Activated CD4-positive, alpha-beta memory T cell treated with anti-CD3 and anti-CD28 coated beads for 36 hours (primary cell): ENCODE measurements at regions of chr5 and their contacts with region 1.

Region 1: DNA sequence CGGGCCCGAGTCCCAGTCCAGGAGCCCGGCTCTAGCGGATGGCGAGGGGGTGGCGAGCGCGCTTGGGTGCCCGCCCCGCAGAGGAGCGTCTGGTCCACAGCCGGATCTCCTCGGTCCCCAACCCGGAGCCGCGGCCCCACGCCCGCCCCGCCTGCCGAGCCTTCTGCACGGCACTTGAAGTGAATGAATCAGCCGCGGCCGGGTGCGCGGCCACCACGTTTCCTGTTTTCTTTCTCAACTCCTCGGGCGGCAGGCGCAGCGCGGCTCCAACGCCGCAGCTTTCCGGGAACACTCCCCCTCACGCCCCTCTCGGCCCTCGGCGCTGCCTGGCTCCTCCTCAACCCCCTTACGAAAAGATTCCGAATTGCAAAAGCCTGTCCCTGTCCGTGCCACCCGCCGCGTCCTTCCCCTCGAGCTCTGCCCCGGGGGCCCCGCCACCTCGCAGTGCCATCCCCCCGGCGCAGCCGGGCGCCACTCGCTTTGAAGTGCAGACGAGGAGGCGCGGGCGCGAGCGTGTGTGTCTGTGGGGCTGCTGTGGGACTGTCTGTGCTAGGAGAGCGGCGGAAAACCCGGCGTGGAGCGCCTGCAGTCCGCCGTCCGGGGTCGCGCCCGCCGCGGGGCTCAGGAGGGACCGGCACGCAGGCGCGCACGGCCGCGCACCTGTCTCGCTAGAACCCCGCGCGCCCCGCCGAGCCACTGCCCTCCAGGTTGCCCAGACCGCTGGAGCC is 456.6 kb downstream of the RAB3C start:
- DNase-seq: peak; percentile 93
- H3K4me3 Mint-ChIP-seq: peak overlapping the region; percentile 82
- H3K27ac Mint-ChIP-seq: peak overlapping the region; percentile 87
- H3K4me1 Mint-ChIP-seq: peaks cover 48% of the 10 kb centered on the region
- H3K27me3 Mint-ChIP-seq: no peaks in the 10 kb centered on the region

Region 2: DNA sequence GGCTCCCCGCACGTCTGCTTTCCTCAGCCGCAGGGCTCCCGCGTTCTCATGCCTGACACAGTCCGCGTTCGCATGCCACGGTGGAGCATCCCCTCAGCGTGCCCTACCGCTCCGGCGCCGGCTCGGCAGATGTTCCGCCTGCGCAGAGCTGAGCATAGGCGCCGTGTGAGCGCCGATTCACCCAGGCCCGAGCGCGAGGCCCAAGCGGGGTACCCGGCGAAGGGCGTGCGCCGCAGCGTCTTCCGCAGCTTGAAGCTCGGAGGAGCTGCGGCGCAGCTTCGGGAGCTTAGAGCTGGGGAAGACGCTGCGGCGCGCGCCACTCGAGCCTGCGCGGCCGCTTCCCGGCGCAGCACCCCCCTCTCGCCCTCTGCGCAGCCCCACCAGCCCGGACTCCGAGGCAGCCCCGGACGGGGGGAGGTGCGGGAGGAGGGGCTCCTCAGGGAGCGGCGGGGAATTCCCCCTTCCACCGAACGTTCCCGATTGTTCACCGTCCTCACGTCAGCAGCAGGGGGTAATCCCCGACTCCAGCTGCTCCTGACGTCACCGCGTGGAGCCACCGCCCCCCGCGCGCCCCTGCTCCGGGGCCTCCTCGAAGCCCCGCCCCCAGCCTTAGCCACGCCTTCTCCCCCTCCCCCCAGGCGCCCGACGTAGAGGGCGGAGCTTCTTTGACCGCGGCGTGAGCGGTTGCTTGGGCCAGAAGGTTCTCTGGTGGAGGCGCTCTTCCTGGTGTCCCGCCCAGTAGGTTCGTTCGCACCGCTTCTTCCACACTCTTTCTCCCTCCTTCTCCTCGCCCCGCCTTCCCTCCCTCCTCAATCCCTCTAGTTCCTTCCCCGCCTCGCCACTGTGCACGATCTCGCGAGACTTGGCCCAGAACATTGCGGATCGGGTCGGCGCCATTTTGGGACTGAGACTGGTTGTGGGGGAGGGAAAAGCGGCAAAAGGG is 1866.0 kb before region 1 on chr5 and contains the start of gene GPBP1:
- CTCF ChIA-PET with region 1: no interaction called
- POLR2A ChIA-PET with region 1: no interaction called
- intact Hi-C with region 1: loop called (anchors 5 kb)
- DNase-seq: peak; percentile 98
- H3K4me3 Mint-ChIP-seq: peak within 1 kb of the TSS; percentile 86
- H3K27ac Mint-ChIP-seq: peak within 1 kb of the TSS; percentile 98
- H3K4me1 Mint-ChIP-seq: peaks cover 20% of the 10 kb centered on the region
- H3K27me3 Mint-ChIP-seq: no peaks in the 10 kb centered on the region
- total RNA-seq, gene GPBP1: 94.1 to 98.5 TPM

Region 3: GRCh38 chr5:59020611-59021285 is 18.7 kb before region 1 on chr5:
- CTCF ChIA-PET with region 1: interaction called, 6 read pairs
- POLR2A ChIA-PET with region 1: interaction called, 8 read pairs
- intact Hi-C with region 1: loop called (anchors 1 kb)
- DNase-seq: peak; percentile 67
- H3K4me3 Mint-ChIP-seq: peak overlapping the region; percentile 17
- H3K27ac Mint-ChIP-seq: peak overlapping the region; percentile 87
- H3K4me1 Mint-ChIP-seq: peaks cover 50% of the 10 kb centered on the region
- H3K27me3 Mint-ChIP-seq: no peaks in the 10 kb centered on the region

Region 4: GRCh38 chr5:59099270-59099994 is 60.0 kb after region 1 on chr5:
- CTCF ChIA-PET with region 1: interaction called, 4 read pairs
- POLR2A ChIA-PET with region 1: interaction called, 3 read pairs
- intact Hi-C with region 1: loop called (anchors 1 kb)
- DNase-seq: peak; percentile 63
- H3K4me3 Mint-ChIP-seq: peak overlapping the region; percentile 8
- H3K27ac Mint-ChIP-seq: peak overlapping the region; percentile 73
- H3K4me1 Mint-ChIP-seq: peaks cover 37% of the 10 kb centered on the region
- H3K27me3 Mint-ChIP-seq: no peaks in the 10 kb centered on the region

Region 5: GRCh38 chr5:59174248-59174844 is 134.9 kb after region 1 on chr5:
- CTCF ChIA-PET with region 1: interaction called, 144 read pairs
- POLR2A ChIA-PET with region 1: interaction called, 3 read pairs
- intact Hi-C with region 1: loop called (anchors 1 kb)
- DNase-seq: peak; percentile 33
- H3K4me3 Mint-ChIP-seq: no peak overlapping the region
- H3K27ac Mint-ChIP-seq: no peak overlapping the region
- H3K4me1 Mint-ChIP-seq: peaks cover 24% of the 10 kb centered on the region
- H3K27me3 Mint-ChIP-seq: no peaks in the 10 kb centered on the region